PC-3 (cell line): ENCODE measurements at regions of chr2 and their contacts with region 1.

Region 1: DNA sequence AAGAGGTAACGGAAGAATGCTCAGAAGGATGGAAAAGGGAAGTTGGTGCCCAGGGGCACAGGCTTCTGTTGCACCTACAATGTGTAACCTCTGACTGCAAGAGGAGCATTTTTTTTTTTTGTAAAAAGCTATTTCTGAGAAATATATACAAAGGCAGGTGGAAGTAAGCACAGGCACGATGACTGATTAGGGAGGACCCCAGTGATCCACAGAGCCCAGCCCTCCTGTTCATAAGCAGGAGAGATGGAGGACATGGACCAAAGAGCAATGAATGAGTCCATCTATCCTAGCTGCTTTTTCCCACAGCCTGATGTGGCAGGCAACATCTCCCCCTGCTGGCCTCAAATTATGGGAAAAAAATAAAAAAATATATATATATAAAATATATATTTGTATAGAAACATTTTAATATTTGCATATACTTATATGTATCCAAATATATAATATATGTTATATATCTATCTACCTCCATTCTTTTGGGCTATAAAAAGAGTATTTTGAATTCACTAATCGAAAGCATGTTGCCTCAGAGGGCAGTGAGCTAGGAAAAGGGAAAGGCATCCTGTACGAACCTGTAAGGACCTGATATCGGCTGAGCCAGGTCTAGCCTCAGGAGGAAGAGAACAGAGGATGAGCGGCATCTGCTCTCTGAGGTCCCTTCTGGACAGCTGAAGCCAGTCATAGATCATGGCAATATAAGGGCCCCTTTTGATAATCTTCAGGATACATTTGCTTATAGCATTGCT is 166.0 kb upstream of the STK17B start:
- DNase-seq: peak; percentile 70
- ATAC-seq: no peak
- H3K4me3 ChIP-seq: no peak overlapping the region
- H3K27ac ChIP-seq: no peak overlapping the region
- H3K4me1 ChIP-seq: peaks cover 33% of the 10 kb centered on the region
- H3K27me3 ChIP-seq: no peaks in the 10 kb centered on the region
- CTCF ChIP-seq: peak; percentile 42

Region 2: DNA sequence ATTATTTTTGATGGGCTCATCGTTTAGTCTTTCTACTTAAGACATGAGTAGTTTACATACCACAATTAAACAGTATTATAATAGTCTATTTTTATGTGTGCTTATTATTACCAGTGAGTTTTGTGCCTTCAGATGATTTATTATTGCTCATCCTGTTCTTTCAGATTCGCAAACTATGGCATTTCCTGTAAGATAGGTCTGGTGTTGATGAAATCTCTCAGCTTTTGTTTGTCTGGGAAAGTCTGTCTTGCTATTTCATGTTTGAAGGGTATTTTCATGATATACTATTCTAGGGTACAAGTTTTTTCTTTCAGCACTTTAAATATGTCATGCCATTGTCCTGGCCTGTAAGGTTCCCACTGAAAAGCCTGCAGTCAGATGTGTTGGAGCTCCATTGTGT is 370.0 kb before region 1 on chr2:
- CTCF ChIA-PET with region 1: no interaction called
- POLR2A ChIA-PET with region 1: no interaction called
- intact Hi-C with region 1: no loop called
- DNase-seq: no peak
- ATAC-seq: no peak
- H3K4me3 ChIP-seq: no peak overlapping the region
- H3K27ac ChIP-seq: no peak overlapping the region
- H3K4me1 ChIP-seq: no peaks in the 10 kb centered on the region
- H3K27me3 ChIP-seq: no peaks in the 10 kb centered on the region; the same call in 1 of the 2 replicates
- CTCF ChIP-seq: no peak

Region 3: DNA sequence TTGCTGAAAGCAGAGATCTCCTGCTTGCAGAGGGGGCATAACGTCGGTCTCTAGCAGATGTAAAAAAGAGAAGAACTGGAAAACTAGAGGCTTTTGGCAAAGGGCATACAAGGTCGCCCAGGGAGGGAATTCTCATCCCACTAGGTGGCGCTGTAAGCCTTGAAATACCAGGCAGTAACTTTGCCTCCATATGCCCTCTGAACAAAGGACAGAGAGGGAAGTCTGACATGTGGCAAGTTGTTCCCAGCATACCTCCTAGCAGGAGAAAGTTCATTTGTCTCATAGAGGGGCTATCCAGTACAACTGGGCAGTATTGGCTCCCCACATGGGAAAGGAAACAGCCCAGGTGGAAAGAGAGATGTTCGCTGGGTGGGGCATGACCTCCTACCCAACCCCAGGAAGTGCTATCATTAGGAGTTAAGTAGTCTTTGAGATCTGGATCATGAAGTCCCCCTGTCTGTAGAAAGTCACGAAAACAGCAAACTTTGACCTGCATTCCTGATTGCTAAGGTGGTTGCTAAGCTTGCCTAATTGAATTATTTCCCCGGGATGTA is 205.9 kb before region 1 on chr2:
- CTCF ChIA-PET with region 1: interaction called, 4 read pairs
- POLR2A ChIA-PET with region 1: no interaction called
- intact Hi-C with region 1: loop called (anchors 1 kb)
- DNase-seq: peak; percentile 71
- ATAC-seq: peak; percentile 65
- H3K4me3 ChIP-seq: no peak overlapping the region
- H3K27ac ChIP-seq: no peak overlapping the region
- H3K4me1 ChIP-seq: no peaks in the 10 kb centered on the region
- H3K27me3 ChIP-seq: no peaks in the 10 kb centered on the region
- CTCF ChIP-seq: peak; percentile 72

Region 4: DNA sequence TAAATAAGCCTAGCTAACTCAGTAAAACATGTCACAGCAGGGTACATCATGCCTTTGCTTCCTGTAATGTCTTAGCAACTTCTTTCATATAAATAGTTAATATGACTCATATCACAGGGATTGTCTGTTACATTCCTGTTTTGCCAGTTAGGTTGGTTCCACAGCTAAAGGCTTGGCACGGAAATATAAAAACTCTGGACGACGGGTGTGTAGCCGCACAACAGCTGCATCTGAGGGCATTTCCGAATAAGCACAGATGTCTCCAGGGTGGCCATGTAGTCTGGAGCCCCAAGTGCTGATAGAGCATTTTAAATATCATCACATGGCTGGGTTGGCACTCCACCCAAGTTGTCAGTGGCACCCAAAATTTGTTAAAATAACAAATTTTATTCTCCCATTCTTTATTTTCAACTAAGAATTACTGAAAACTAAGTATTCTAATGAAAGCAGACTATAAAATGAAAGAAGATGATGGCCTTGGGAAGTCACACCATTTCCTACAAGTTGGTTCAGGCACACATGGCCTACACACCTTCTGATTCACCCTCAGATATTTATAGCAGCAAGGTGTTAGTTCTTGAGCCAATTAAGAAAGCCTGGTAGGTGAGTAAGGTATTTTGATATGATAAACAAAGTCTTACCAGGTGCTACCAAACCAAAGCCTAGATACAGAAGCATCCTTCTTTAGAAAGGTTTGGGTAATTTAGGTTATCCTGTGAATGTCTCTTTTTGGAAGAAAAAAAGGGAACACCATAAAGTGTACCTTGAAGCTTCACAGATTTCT is 104.2 kb before region 1 on chr2:
- CTCF ChIA-PET with region 1: no interaction called
- POLR2A ChIA-PET with region 1: interaction called, 3 read pairs
- intact Hi-C with region 1: loop called (anchors 5 kb)
- DNase-seq: peak; percentile 97
- ATAC-seq: peak; percentile 96
- H3K4me3 ChIP-seq: peak overlapping the region; percentile 13; the same call in 1 of the 2 replicates
- H3K27ac ChIP-seq: peak overlapping the region; percentile 77
- H3K4me1 ChIP-seq: peaks cover 26% of the 10 kb centered on the region
- H3K27me3 ChIP-seq: no peaks in the 10 kb centered on the region
- CTCF ChIP-seq: no peak

Region 5: DNA sequence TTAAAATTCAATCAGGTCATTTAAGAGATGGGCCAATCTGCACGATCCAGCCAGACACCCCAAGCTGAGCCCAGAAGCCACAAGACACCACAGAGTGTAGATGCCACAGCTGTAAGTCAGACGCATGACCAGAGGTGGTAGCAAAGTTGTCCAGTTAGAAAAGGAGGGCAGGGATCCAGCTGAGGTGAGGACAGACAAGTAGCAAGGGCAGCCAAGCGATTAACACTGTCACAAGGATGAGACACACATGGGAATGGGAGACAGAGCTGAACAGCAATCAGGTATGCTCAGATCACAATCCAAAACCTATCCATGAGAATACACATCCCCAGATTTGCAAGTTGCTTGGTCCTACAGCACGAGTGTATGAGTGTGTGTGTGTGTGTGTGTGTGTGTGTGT is 22.6 kb before region 1 on chr2:
- CTCF ChIA-PET with region 1: no interaction called
- POLR2A ChIA-PET with region 1: no interaction called
- intact Hi-C with region 1: loop called (anchors 1 kb)
- DNase-seq: peak; percentile 70
- ATAC-seq: peak; percentile 69
- H3K4me3 ChIP-seq: no peak overlapping the region
- H3K27ac ChIP-seq: peak overlapping the region; percentile 90
- H3K4me1 ChIP-seq: peaks cover 29% of the 10 kb centered on the region
- H3K27me3 ChIP-seq: no peaks in the 10 kb centered on the region
- CTCF ChIP-seq: peak; percentile 27; the same call in 1 of the 2 replicates

Region 6: DNA sequence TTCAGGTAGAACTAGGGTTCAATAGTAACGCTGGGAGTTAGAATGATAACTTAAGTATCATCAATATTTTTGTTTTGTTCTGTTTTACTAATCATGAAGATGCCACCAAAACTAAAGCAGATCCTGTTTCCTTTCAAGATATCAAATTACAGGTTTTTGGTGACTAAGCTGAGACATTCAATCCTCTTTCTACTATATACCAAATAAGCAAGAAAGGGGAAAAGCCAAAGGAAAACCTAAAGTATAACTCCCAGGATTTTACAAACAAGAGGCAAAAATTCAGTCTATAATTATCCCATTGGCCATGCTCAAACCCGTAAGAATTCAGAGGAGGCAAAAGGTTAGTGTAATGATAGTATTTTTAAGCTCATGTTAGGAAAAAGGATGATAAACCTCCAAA is 126.9 kb after region 1 on chr2:
- CTCF ChIA-PET with region 1: interaction called, 11 read pairs
- POLR2A ChIA-PET with region 1: no interaction called
- intact Hi-C with region 1: no loop called
- DNase-seq: peak; percentile 41
- ATAC-seq: peak; percentile 64
- H3K4me3 ChIP-seq: no peak overlapping the region
- H3K27ac ChIP-seq: no peak overlapping the region
- H3K4me1 ChIP-seq: peaks cover 9% of the 10 kb centered on the region
- H3K27me3 ChIP-seq: no peaks in the 10 kb centered on the region
- CTCF ChIP-seq: no peak